ENCODE measurements at regions of chr9 and their contacts with region 1.

Region 1: GRCh38 chr9:86534572-86535258 is 180.5 kb upstream of the TUT7 start:
- DNase-seq: no peak
- ATAC-seq: peak; percentile 91

Region 2: GRCh38 chr9:87436716-87437115 is 902.0 kb after region 1 on chr9:
- intact Hi-C with region 1: loop called (anchors 10 kb)
- DNase-seq: no peak
- ATAC-seq: no peak

Measured in sciatic nerve (tissue), 2 donors.